H1 (cell line): ENCODE measurements at regions of chr3 and their contacts with region 1.

Region 1: GRCh38 chr3:57199895-57200297 is at the start of gene HESX1:
- DNase-seq: peak; percentile 68 to 75
- H3K4me3 ChIP-seq: peak within 1 kb of the TSS; percentile 49 to 73 (median 60)
- H3K27ac ChIP-seq: no peak within 1 kb of the TSS
- H3K4me1 ChIP-seq: peaks cover 1 to 10% (median 4%) of the 10 kb centered on the region in 4 experiments; a peak in 5 of 7 replicates
- H3K27me3 ChIP-seq: no peaks in the 10 kb centered on the region; a peak in 1 of 7 replicates
- CTCF ChIP-seq: no peak
- EP300 ChIP-seq: peak in 1 of 2 experiments; percentile 87; a peak in 1 of 3 replicates
- POLR2A ChIP-seq: peak; percentile 79 to 94
- RAD21 ChIP-seq: no peak
- total RNA-seq, gene HESX1: 9.0 and 12.0 TPM in 2 replicates

Region 2: GRCh38 chr3:57234613-57235575 is 35.0 kb after region 1 on chr3:
- CTCF ChIA-PET with region 1: interaction called, 12 read pairs
- POLR2A ChIA-PET with region 1: interaction called, 4 read pairs
- DNase-seq: no peak
- H3K4me3 ChIP-seq: no peak overlapping the region
- H3K27ac ChIP-seq: no peak overlapping the region
- H3K4me1 ChIP-seq: no peaks in the 10 kb centered on the region
- H3K27me3 ChIP-seq: no peaks in the 10 kb centered on the region
- CTCF ChIP-seq: no peak
- EP300 ChIP-seq: no peak
- POLR2A ChIP-seq: no peak
- RAD21 ChIP-seq: no peak

Region 3: DNA sequence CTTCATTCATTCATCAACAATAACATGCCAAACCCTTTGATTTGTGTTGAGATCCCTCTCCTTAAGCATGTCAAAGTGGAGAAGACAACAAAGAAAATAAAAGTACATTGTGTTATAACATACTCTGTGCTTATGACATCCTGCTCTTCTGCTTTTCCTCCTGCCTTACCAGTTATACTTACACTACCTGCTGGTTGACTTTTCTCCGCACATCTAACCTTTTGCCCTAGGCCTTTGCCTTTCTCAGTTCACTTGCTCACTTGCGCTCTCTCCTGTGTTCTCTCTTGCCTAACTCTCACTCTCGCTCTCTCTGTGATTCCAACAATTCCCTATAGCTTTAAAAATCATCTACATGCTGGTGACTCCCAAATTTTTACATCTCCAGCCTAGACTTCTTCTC is 338.6 kb after region 1 on chr3:
- CTCF ChIA-PET with region 1: no interaction called
- POLR2A ChIA-PET with region 1: no interaction called
- DNase-seq: no peak
- H3K4me3 ChIP-seq: no peak overlapping the region
- H3K27ac ChIP-seq: no peak overlapping the region
- H3K4me1 ChIP-seq: no peaks in the 10 kb centered on the region
- H3K27me3 ChIP-seq: no peaks in the 10 kb centered on the region; a peak in 1 of 7 replicates
- CTCF ChIP-seq: no peak
- EP300 ChIP-seq: no peak
- POLR2A ChIP-seq: no peak
- RAD21 ChIP-seq: no peak